Mucosa of descending colon (tissue), 3 donors: ENCODE measurements at regions of chr12 and their contacts with region 1.

Region 1: DNA sequence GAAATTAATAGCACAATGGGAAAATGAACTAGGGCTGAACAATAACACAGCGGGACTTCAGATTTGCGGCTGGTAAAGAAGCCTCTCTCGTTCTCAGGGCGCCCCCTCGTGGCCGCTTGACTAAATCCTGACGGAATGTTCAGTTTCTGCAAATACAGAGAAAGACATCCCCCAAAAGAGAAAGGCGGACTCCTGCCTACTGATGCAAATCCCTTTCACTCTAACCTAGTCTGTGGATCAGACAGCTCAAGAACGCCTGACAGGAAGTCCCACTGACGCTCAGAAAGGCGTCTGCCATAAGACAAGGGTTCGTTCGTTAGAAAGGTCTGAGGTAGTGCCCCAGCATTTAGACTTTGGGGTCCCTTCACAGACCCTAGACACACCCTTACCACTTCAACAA is 2.5 kb downstream of the NUAK1 start:
- DNase-seq: peak; percentile 78 to 95 (median 87)
- ATAC-seq: peak; percentile 41
- H3K4me3 ChIP-seq: no peak overlapping the region
- H3K4me1 ChIP-seq: peaks cover 7% of the 10 kb centered on the region
- CTCF ChIP-seq: no peak

Region 2: GRCh38 chr12:105420659-105421240 is 715.5 kb before region 1 on chr12:
- intact Hi-C with region 1: loop called (anchors 5 to 10 kb)
- DNase-seq: peak in 2 of 3 donors; percentile 72 to 80
- ATAC-seq: peak; percentile 91
- H3K4me3 ChIP-seq: no peak overlapping the region
- H3K4me1 ChIP-seq: no peaks in the 10 kb centered on the region
- CTCF ChIP-seq: peak; percentile 74

Region 3: GRCh38 chr12:105562199-105562971 is 573.9 kb before region 1 on chr12:
- intact Hi-C with region 1: loop called in 1 of 2 experiments (anchors 10 kb)
- DNase-seq: peak; percentile 33 to 47 (median 42)
- ATAC-seq: peak; percentile 90
- H3K4me3 ChIP-seq: no peak overlapping the region
- H3K4me1 ChIP-seq: peaks cover 6% of the 10 kb centered on the region
- CTCF ChIP-seq: no peak

Region 4: DNA sequence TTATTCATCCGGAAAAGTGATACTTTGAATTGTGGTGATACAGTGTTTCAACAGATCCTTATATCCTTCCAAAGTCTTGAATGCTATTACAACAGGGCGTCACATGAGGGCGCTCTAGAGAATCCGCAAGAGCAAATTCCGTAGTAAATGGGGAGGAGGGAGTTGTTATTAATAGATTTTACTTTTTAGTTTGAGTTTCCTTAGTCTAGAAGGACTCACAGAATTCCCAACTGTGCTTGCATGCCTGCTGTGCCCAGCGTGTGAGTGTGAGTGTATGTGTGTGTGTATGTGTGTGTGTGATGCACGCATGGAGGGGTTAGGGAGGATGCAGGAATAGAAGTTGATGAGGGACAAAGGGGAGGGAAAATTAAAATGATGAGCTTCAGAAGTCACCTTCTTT is 430.5 kb before region 1 on chr12:
- intact Hi-C with region 1: loop called (anchors 5 to 10 kb)
- DNase-seq: peak in 1 of 3 donors; percentile 54
- ATAC-seq: peak; percentile 59
- H3K4me3 ChIP-seq: no peak overlapping the region
- H3K4me1 ChIP-seq: no peaks in the 10 kb centered on the region
- CTCF ChIP-seq: peak; percentile 47

Region 5: GRCh38 chr12:106030210-106031175 is 105.8 kb before region 1 on chr12:
- intact Hi-C with region 1: loop called in 1 of 2 experiments (anchors 10 kb)
- DNase-seq: no peak
- ATAC-seq: no peak
- H3K4me3 ChIP-seq: no peak overlapping the region
- H3K4me1 ChIP-seq: no peaks in the 10 kb centered on the region
- CTCF ChIP-seq: no peak

Region 6: DNA sequence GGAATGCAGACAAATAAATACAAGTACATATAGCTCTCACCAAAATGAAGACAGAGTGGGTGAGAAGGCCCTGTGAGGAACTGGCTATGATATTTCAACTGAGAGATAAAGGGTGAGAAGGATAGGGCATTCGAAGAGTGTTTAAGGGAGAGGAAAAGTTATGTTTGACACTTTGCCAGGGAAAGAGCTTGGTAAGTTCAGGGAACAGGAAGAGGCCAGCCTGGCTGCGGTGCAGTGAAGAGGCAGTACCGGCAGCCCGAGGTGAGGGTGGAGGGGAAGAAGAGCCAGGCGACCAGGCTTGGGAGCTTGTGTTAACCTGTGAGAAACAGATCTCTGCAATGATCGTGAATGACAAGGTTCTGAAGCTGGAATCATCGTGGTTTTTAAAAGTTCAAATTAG is 361.8 kb after region 1 on chr12:
- intact Hi-C with region 1: no loop called
- DNase-seq: no peak
- ATAC-seq: no peak
- H3K4me3 ChIP-seq: no peak overlapping the region
- H3K4me1 ChIP-seq: no peaks in the 10 kb centered on the region
- CTCF ChIP-seq: no peak